PC-9 (cell line): ENCODE measurements at regions of chr10 and their contacts with region 1.

Region 1: DNA sequence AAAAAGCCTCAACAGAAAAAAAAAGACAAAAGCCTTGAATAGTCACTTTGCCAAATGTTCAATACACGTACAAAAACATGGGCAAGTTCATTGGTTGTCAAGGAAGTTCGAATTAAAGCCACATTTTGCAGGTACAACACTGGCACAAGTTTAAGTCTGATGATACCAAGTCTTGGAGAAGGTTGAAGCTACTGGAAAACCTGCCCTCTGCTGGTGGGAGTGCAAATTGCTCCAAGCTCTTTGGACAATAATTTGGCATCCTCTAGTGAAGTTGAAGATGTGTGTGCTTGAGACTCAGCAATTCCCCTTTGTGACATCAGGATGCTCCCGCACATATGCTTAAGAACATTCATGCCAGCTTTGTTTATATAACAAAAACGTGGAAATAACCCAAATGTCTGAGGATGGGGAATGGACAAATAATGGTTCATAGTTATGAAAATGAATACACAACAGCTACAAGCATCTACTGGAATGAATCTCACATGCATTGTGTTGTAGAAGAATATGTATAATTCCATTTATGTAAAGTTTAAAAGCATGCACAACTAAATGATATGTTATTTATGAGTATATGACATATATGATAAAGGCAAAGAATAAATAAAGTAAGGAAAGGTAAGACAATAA is 120.0 kb upstream of the PLPP4 start:
- DNase-seq: peak in 1 of 2 experiments; percentile 24
- H3K4me3 ChIP-seq: no peak overlapping the region
- H3K27ac ChIP-seq: no peak overlapping the region
- H3K4me1 ChIP-seq: no peaks in the 10 kb centered on the region
- H3K27me3 ChIP-seq: 0 out of 2 replicates have a peak, but pooled peaks cover 5% of the 10 kb centered on the region
- CTCF ChIP-seq: peak; percentile 69

Region 2: DNA sequence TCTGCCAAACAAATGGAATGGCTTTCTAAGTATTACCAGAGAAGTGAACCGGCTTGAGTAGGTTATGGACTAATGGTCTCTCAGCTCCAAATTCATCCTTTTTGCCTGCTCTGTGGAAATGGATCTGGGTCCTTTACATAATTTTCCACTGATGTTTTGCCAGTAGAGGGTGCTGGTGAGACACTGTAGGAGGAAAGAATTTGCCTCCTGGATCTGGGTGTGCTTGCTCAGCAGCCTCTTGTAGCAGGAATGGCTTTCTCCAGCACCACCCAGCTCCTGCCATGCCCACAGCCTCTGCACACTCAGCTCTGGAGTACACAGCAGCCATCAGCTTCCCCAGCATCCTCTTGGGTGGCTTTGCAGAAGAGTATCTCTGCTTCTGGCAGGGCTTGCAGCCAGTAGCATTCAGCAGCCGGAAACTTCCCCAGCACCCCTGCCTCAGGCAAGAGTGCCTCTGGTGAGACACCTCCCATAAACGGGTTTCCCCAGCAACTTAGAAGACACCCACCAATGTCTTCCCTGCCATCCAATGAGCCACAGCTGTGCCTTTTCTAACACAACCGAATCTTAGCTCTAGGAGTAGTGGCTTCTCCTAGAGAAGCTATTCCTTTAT is 115.0 kb before region 1 on chr10:
- CTCF ChIA-PET with region 1: no interaction called
- POLR2A ChIA-PET with region 1: no interaction called
- intact Hi-C with region 1: loop called (anchors 10 kb)
- DNase-seq: peak; percentile 7 to 43
- H3K4me3 ChIP-seq: no peak overlapping the region
- H3K27ac ChIP-seq: no peak overlapping the region
- H3K4me1 ChIP-seq: no peaks in the 10 kb centered on the region
- H3K27me3 ChIP-seq: no peaks in the 10 kb centered on the region
- CTCF ChIP-seq: peak; percentile 70

Region 3: GRCh38 chr10:120347644-120348043 is 10.6 kb after region 1 on chr10:
- CTCF ChIA-PET with region 1: no interaction called
- POLR2A ChIA-PET with region 1: no interaction called
- intact Hi-C with region 1: no loop called
- DNase-seq: no peak
- H3K4me3 ChIP-seq: no peak overlapping the region
- H3K27ac ChIP-seq: no peak overlapping the region
- H3K4me1 ChIP-seq: no peaks in the 10 kb centered on the region
- H3K27me3 ChIP-seq: no peaks in the 10 kb centered on the region
- CTCF ChIP-seq: no peak

Region 4: GRCh38 chr10:120477021-120477742 is 140.2 kb after region 1 on chr10:
- CTCF ChIA-PET with region 1: no interaction called
- POLR2A ChIA-PET with region 1: no interaction called
- intact Hi-C with region 1: no loop called
- DNase-seq: no peak
- H3K4me3 ChIP-seq: no peak overlapping the region
- H3K27ac ChIP-seq: no peak overlapping the region
- H3K4me1 ChIP-seq: no peaks in the 10 kb centered on the region
- H3K27me3 ChIP-seq: no peaks in the 10 kb centered on the region
- CTCF ChIP-seq: no peak